ENCODE measurements at regions of chr19 and their contacts with region 1.

Region 1: GRCh38 chr19:43148233-43148632 is 38.1 kb downstream of the PSG5 start:
- DNase-seq: no peak
- ATAC-seq: no peak
- H3K4me3 ChIP-seq: no peak overlapping the region
- H3K4me3 Mint-ChIP-seq: no peak overlapping the region
- H3K27ac ChIP-seq: no peak overlapping the region
- H3K27ac Mint-ChIP-seq: no peak overlapping the region
- H3K4me1 ChIP-seq: no peaks in the 10 kb centered on the region
- H3K4me1 Mint-ChIP-seq: no peaks in the 10 kb centered on the region
- H3K27me3 ChIP-seq: no peaks in the 10 kb centered on the region
- H3K27me3 Mint-ChIP-seq: peaks cover 23% of the 10 kb centered on the region
- CTCF ChIP-seq: no peak

Region 2: DNA sequence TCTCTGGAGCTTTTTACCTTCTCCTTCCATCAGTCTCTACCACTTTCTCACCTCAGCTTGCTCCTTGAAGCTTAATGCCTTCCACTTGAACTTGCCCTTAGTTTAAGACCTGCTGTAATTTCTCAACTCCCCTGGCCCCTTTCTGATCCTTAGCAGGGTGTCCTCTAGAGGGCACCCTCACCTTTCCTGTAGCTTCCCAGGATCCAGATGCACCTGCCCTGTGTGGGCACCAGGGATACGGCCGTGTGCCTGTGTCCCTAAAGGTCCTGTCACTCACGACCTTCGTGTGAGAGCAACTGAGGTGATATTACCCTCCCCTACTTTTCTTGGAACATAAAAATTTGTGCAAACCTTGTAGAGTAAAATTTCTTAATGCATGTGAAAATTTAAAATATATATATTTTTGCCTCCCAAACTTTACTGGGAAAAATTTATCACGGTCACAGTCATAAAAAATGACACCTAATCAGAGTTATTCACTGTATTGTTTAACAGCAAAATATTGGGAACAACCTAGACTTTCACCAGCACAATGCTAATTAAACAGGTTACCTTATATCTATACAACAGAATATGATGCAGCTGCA is 454.4 kb before region 1 on chr19:
- CTCF ChIA-PET with region 1: no interaction called
- POLR2A ChIA-PET with region 1: no interaction called
- intact Hi-C with region 1: loop called in 1 of 2 experiments (anchors 5 kb)
- DNase-seq: no peak
- ATAC-seq: no peak
- H3K4me3 ChIP-seq: no peak overlapping the region
- H3K4me3 Mint-ChIP-seq: no peak overlapping the region
- H3K27ac ChIP-seq: no peak overlapping the region
- H3K27ac Mint-ChIP-seq: no peak overlapping the region
- H3K4me1 ChIP-seq: no peaks in the 10 kb centered on the region
- H3K4me1 Mint-ChIP-seq: no peaks in the 10 kb centered on the region
- H3K27me3 ChIP-seq: no peaks in the 10 kb centered on the region
- H3K27me3 Mint-ChIP-seq: peaks cover 45% of the 10 kb centered on the region
- CTCF ChIP-seq: no peak

Region 3: GRCh38 chr19:43351998-43352746 is 203.9 kb after region 1 on chr19:
- CTCF ChIA-PET with region 1: no interaction called
- POLR2A ChIA-PET with region 1: no interaction called
- intact Hi-C with region 1: no loop called
- DNase-seq: no peak
- ATAC-seq: no peak
- H3K4me3 ChIP-seq: no peak overlapping the region
- H3K4me3 Mint-ChIP-seq: no peak overlapping the region
- H3K27ac ChIP-seq: no peak overlapping the region
- H3K27ac Mint-ChIP-seq: no peak overlapping the region
- H3K4me1 ChIP-seq: no peaks in the 10 kb centered on the region
- H3K4me1 Mint-ChIP-seq: no peaks in the 10 kb centered on the region
- H3K27me3 ChIP-seq: no peaks in the 10 kb centered on the region
- H3K27me3 Mint-ChIP-seq: peaks cover 21% of the 10 kb centered on the region
- CTCF ChIP-seq: no peak

Region 4: GRCh38 chr19:43503501-43504425 is 355.5 kb after region 1 on chr19:
- CTCF ChIA-PET with region 1: no interaction called
- POLR2A ChIA-PET with region 1: no interaction called
- intact Hi-C with region 1: no loop called
- DNase-seq: peak; percentile 98 to 100 (median 99)
- ATAC-seq: peak; percentile 95
- H3K4me3 ChIP-seq: peak overlapping the region; percentile 97
- H3K4me3 Mint-ChIP-seq: peak overlapping the region; percentile 97
- H3K27ac ChIP-seq: peak overlapping the region; percentile 84 to 86
- H3K27ac Mint-ChIP-seq: peak overlapping the region; percentile 96
- H3K4me1 ChIP-seq: peaks cover 19% of the 10 kb centered on the region
- H3K4me1 Mint-ChIP-seq: peaks cover 34% of the 10 kb centered on the region
- H3K27me3 ChIP-seq: no peaks in the 10 kb centered on the region
- H3K27me3 Mint-ChIP-seq: no peaks in the 10 kb centered on the region
- CTCF ChIP-seq: no peak

Region 5: GRCh38 chr19:43842007-43842406 is 693.8 kb after region 1 on chr19:
- CTCF ChIA-PET with region 1: no interaction called
- POLR2A ChIA-PET with region 1: no interaction called
- intact Hi-C with region 1: no loop called
- DNase-seq: no peak
- ATAC-seq: no peak
- H3K4me3 ChIP-seq: no peak overlapping the region
- H3K4me3 Mint-ChIP-seq: no peak overlapping the region
- H3K27ac ChIP-seq: no peak overlapping the region
- H3K27ac Mint-ChIP-seq: no peak overlapping the region
- H3K4me1 ChIP-seq: no peaks in the 10 kb centered on the region
- H3K4me1 Mint-ChIP-seq: no peaks in the 10 kb centered on the region
- H3K27me3 ChIP-seq: no peaks in the 10 kb centered on the region
- H3K27me3 Mint-ChIP-seq: no peaks in the 10 kb centered on the region
- CTCF ChIP-seq: no peak

Measured in CD8-positive, alpha-beta T cell (primary cell).